ENCODE measurements at regions of chr2 and their contacts with region 1.

Region 1: DNA sequence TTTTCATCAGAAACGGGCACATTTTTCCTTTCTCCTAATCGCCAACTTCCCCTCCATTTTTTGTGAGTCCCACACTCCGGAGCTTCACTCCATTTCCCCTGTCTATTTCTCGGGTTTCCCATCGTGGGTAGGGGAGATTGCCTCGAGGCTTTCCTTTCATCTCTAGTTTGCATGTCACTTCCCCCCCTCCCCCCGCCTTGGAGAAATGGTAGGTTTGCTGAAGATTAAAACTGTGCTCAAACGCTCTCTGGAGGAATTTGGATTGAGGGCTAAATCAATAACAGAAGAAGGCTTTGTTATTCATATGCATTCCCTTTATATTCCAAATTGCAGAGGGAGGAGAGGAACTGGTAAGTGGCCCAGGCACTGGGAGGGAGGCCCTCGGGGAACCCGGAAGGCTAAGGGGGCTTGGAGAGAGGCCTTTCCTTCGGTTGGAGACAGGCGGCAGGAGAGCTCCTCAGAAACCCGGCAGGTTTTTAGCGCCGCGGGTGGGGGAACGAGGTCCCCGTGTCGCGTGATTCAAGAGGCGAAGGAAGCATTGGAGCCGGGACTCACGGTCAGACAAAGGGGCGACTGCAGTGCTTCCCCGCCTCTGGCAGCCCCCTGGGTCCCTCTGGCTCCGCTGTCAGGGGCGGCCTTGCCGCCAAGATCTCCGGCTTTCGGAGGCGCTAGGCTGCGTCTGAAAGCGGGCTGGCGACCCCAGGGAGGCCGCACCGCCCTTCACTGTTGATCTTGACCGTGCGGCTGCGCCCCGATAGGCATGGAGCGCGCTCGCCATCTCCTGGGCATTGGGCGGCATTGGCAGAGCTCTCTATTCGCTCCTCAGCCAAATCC is 2.4 kb upstream of the HOXD12 start:
- DNase-seq: peak; percentile 66
- ATAC-seq: peak; percentile 97
- H3K4me3 ChIP-seq: peak overlapping the region; percentile 46 to 64
- H3K27ac ChIP-seq: no peak overlapping the region; the same call in 1 of the 2 replicates
- H3K4me1 ChIP-seq: peaks cover 5 to 18% of the 10 kb centered on the region in 2 experiments; a peak in 3 of 4 replicates
- H3K27me3 ChIP-seq: no peaks in the 10 kb centered on the region
- CTCF ChIP-seq: peak; percentile 79 to 87 (median 84)
- POLR2A ChIP-seq: no peak
- RAD21 ChIP-seq: peak; percentile 90

Region 2: GRCh38 chr2:174771631-174772471 is 1325.4 kb before region 1 on chr2:
- CTCF ChIA-PET with region 1: no interaction called
- POLR2A ChIA-PET with region 1: no interaction called
- RAD21 ChIA-PET with region 1: interaction called in 1 of 2 experiments, 3 read pairs
- intact Hi-C with region 1: loop called (anchors 5 kb)
- DNase-seq: peak; percentile 44
- ATAC-seq: peak; percentile 98
- H3K4me3 ChIP-seq: no peak overlapping the region
- H3K27ac ChIP-seq: no peak overlapping the region
- H3K4me1 ChIP-seq: peaks cover 0 to 12% of the 10 kb centered on the region in 2 experiments; a peak in 2 of 4 replicates
- H3K27me3 ChIP-seq: no peaks in the 10 kb centered on the region
- CTCF ChIP-seq: peak; percentile 87 to 89 (median 87)
- POLR2A ChIP-seq: no peak
- RAD21 ChIP-seq: peak; percentile 93

Region 3: DNA sequence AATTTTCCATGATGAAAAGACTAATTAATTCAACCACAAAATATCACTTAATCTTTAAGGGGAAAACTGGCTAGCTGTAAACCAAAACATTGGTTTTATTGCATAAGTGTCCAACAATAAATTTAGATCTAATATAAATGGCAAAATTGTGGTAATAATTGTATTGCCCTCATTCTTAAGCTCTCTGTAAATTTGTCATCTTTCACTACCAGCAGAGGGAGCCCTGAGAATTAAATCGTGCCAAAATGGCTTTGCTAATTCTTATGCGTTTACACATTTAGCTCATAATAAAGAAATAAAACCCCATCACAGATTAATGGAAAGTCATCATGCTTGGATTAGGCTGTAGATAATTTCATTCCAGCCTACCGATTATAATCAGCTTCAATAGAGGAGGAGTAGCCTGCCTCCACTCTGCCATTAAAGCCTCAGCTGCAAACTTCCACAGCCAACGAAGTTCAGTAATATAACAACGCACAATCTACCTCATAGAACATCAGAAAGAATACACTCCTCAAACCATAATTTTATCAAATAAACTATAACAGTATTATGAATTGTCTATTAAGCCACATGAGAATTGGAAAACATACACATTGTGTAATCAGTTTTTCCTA is 845.7 kb before region 1 on chr2:
- CTCF ChIA-PET with region 1: interaction called, 24 read pairs
- POLR2A ChIA-PET with region 1: no interaction called
- RAD21 ChIA-PET with region 1: no interaction called
- intact Hi-C with region 1: loop called (anchors 2 kb)
- DNase-seq: peak; percentile 24
- ATAC-seq: peak; percentile 75
- H3K4me3 ChIP-seq: no peak overlapping the region
- H3K27ac ChIP-seq: no peak overlapping the region
- H3K4me1 ChIP-seq: no peaks in the 10 kb centered on the region
- H3K27me3 ChIP-seq: no peaks in the 10 kb centered on the region
- CTCF ChIP-seq: peak; percentile 53 to 78 (median 65); a peak in 5 of 6 replicates
- POLR2A ChIP-seq: no peak
- RAD21 ChIP-seq: peak; percentile 51

Region 4: GRCh38 chr2:175366815-175367214 is 730.4 kb before region 1 on chr2:
- CTCF ChIA-PET with region 1: interaction called, 23 read pairs
- POLR2A ChIA-PET with region 1: no interaction called
- RAD21 ChIA-PET with region 1: interaction called in 1 of 2 experiments, 3 read pairs
- intact Hi-C with region 1: loop called (anchors 1 kb)
- DNase-seq: peak; percentile 38
- ATAC-seq: peak; percentile 100
- H3K4me3 ChIP-seq: no peak overlapping the region
- H3K27ac ChIP-seq: no peak overlapping the region
- H3K4me1 ChIP-seq: no peaks in the 10 kb centered on the region
- H3K27me3 ChIP-seq: no peaks in the 10 kb centered on the region
- CTCF ChIP-seq: peak; percentile 80 to 90 (median 87)
- POLR2A ChIP-seq: no peak
- RAD21 ChIP-seq: peak; percentile 88

Region 5: DNA sequence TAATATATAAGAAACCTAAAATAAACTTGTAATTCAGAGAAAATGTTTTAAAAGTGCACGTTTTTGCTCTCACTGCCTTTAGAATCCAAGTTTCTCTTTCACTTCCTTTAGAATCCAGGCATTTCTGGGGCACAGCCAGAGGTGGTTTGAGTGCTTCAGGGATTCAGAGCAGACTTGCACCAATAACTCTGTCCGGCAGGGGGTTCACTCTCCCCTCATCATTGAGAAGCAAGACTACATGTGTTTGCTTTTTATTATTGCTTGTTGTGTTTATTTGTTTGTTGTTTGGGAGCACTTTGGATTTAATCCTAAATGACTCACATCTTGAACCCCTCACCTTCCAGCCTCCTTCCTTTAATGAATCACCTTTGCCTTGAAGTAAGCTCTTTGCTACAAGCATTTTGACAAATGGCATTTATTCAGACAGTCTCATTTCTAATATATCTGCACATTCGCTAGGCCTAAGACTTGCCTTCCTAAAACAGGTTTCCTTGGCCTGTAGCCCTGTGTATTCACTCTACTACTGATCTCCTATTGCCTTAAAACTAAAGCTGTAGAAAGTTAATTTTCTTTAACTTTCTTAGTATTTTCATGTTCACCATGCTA is 682.2 kb before region 1 on chr2:
- CTCF ChIA-PET with region 1: no interaction called
- POLR2A ChIA-PET with region 1: no interaction called
- RAD21 ChIA-PET with region 1: no interaction called
- intact Hi-C with region 1: loop called (anchors 2 kb)
- DNase-seq: peak; percentile 54
- ATAC-seq: peak; percentile 95
- H3K4me3 ChIP-seq: no peak overlapping the region
- H3K27ac ChIP-seq: no peak overlapping the region
- H3K4me1 ChIP-seq: no peaks in the 10 kb centered on the region
- H3K27me3 ChIP-seq: no peaks in the 10 kb centered on the region
- CTCF ChIP-seq: peak; percentile 52 to 80 (median 78); a peak in 5 of 6 replicates
- POLR2A ChIP-seq: no peak
- RAD21 ChIP-seq: peak; percentile 66

Region 6: GRCh38 chr2:175690113-175690837 is 406.9 kb before region 1 on chr2:
- CTCF ChIA-PET with region 1: interaction called, 10 read pairs
- POLR2A ChIA-PET with region 1: interaction called, 3 read pairs
- RAD21 ChIA-PET with region 1: interaction called in 1 of 2 experiments, 4 read pairs
- intact Hi-C with region 1: loop called (anchors 1 kb)
- DNase-seq: peak; percentile 58
- ATAC-seq: peak; percentile 78
- H3K4me3 ChIP-seq: no peak overlapping the region
- H3K27ac ChIP-seq: no peak overlapping the region
- H3K4me1 ChIP-seq: no peaks in the 10 kb centered on the region
- H3K27me3 ChIP-seq: no peaks in the 10 kb centered on the region
- CTCF ChIP-seq: peak; percentile 56 to 80 (median 78)
- POLR2A ChIP-seq: no peak
- RAD21 ChIP-seq: peak; percentile 78

Region 7: DNA sequence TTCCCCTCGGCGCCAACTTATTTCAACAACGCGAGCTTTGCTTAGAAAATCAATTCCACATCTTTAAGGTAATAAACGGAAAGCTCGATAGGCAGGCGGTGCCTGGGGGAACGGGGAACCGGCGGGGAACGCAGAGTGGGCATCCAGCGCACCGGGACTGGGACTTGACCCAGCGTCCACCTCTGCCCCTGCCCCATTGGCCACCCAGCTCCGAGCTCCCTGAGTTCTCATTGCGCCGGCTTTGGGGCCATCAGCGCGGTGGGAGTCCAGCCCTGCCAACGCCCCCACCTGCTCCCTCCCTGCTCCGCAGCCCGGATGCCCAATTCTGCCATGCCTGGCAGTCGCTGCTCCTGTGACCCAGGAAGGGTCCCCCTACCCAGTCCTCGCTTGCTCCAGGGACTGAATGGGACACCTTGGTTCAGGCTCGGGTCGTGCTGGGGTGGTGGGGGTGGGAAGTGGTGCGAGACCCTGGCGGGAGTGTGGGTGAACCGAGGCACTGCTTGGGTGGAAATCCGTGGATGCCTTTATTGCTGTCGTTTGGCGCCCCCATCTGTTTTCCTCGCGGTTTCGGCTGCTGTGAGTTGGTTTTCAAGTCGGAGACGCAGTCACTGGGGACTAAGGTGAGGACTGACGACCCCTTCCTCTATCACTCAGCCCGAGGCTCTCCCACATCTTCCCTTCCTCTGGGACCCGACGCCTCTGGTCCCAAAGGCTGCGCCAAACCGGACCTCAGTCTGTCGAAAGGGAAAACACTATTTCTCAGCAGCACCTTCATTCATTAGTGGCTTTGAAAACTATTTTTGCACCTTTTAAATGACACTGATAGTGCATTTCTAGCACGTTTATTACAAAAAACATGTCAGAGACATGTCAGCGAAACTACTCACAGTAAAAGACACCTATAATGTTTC is 11.1 kb before region 1 on chr2:
- CTCF ChIA-PET with region 1: no interaction called
- POLR2A ChIA-PET with region 1: no interaction called
- RAD21 ChIA-PET with region 1: no interaction called
- intact Hi-C with region 1: no loop called
- DNase-seq: peak; percentile 13
- ATAC-seq: peak; percentile 46; the same call in 1 of the 2 replicates
- H3K4me3 ChIP-seq: no peak overlapping the region
- H3K27ac ChIP-seq: no peak overlapping the region
- H3K4me1 ChIP-seq: no peaks in the 10 kb centered on the region
- H3K27me3 ChIP-seq: no peaks in the 10 kb centered on the region
- CTCF ChIP-seq: peak; percentile 37 to 52 (median 45); a peak in 4 of 6 replicates
- POLR2A ChIP-seq: no peak
- RAD21 ChIP-seq: peak; percentile 75